Ovary (tissue), 10 donors: ENCODE measurements at regions of chr1 and their contacts with region 1.

Region 1: GRCh38 chr1:8463144-8463927 is 145.4 kb downstream of the SLC45A1 start:
- DNase-seq: peak in 3 of 5 donors; percentile 36 to 49 (median 43)
- H3K4me3 ChIP-seq: no peak overlapping the region
- H3K27ac ChIP-seq: peak overlapping the region; percentile 47 to 72
- H3K4me1 ChIP-seq: peaks cover 22% of the 10 kb centered on the region
- H3K27me3 ChIP-seq: no peaks in the 10 kb centered on the region
- CTCF ChIP-seq: no peak
- EP300 ChIP-seq: no peak
- POLR2A ChIP-seq: no peak

Region 2: DNA sequence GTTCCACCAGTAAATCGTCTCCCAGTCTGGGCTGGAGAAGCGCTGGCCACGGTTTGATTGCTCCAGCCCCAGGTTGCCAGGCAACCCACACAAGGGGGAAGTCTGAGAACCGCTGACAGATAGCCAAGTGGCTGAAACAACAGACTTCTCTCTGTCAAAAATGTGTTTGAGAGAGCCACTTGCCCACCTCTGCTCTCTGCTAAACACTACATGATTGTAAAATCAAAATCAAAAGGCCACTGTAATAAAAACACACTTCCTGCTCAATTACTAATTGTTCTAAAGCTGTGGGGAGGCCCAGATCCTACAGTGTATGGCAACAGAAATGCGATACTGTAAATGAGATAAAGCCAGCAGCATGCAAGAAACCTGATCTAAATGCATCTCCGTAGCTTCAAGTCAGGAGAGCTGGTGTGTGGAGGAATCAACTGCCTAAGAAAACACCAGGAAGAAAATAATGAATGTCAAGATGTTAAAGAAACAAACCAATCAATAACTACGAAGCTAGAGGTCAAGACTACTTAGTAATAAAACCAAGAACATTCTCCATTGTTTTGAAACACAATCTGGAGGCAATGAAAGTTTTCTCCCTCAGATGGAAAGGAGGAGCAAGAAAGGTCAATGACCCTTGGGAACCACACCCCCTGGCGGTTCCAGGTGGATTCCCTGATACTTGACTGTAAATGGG is 24.2 kb before region 1 on chr1:
- intact Hi-C with region 1: no loop called
- DNase-seq: peak; percentile 66 to 77 (median 71)
- H3K4me3 ChIP-seq: no peak overlapping the region
- H3K27ac ChIP-seq: no peak overlapping the region
- H3K4me1 ChIP-seq: peaks cover 4% of the 10 kb centered on the region
- H3K27me3 ChIP-seq: no peaks in the 10 kb centered on the region
- CTCF ChIP-seq: no peak
- EP300 ChIP-seq: no peak
- POLR2A ChIP-seq: no peak

Region 3: GRCh38 chr1:8598060-8598724 is 134.9 kb after region 1 on chr1:
- intact Hi-C with region 1: no loop called
- DNase-seq: peak; percentile 37 to 61 (median 47)
- H3K4me3 ChIP-seq: no peak overlapping the region
- H3K27ac ChIP-seq: peak overlapping the region; percentile 22 to 65
- H3K4me1 ChIP-seq: peaks cover 16% of the 10 kb centered on the region
- H3K27me3 ChIP-seq: no peaks in the 10 kb centered on the region
- CTCF ChIP-seq: peak; percentile 27 to 55 (median 44)
- EP300 ChIP-seq: no peak
- POLR2A ChIP-seq: no peak

Region 4: DNA sequence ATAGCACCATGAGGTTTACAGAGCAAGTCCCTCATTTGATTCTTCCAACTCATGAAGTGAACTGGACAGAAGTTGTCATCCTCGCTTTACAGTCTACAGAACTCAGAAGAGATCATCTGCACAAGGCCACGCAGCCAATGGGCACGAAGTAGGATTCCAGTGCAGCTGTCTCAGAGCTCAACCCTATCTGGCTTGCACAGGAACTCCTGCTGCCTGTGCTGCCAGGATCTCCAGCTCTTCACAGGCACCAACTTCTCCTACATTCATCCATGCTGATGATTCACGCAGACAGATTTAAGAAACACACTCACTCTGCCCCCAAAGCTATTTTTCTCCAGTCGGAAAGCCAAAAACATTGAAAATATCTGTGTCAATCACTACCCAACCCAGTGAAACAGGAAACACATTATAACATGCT is 197.1 kb after region 1 on chr1:
- intact Hi-C with region 1: loop called in 1 of 4 experiments (anchors 10 kb)
- DNase-seq: peak in 4 of 5 donors; percentile 34 to 46 (median 36)
- H3K4me3 ChIP-seq: no peak overlapping the region
- H3K27ac ChIP-seq: peak overlapping the region in 1 of 2 donors; percentile 51
- H3K4me1 ChIP-seq: peaks cover 32% of the 10 kb centered on the region
- H3K27me3 ChIP-seq: no peaks in the 10 kb centered on the region
- CTCF ChIP-seq: no peak
- EP300 ChIP-seq: no peak
- POLR2A ChIP-seq: no peak

Region 5: GRCh38 chr1:8776104-8776503 is 312.8 kb after region 1 on chr1:
- intact Hi-C with region 1: no loop called
- DNase-seq: no peak
- H3K4me3 ChIP-seq: no peak overlapping the region
- H3K27ac ChIP-seq: no peak overlapping the region
- H3K4me1 ChIP-seq: no peaks in the 10 kb centered on the region
- H3K27me3 ChIP-seq: no peaks in the 10 kb centered on the region
- CTCF ChIP-seq: no peak
- EP300 ChIP-seq: no peak
- POLR2A ChIP-seq: no peak

Region 6: GRCh38 chr1:9428601-9429341 is 965.4 kb after region 1 on chr1:
- intact Hi-C with region 1: no loop called
- DNase-seq: peak; percentile 99 to 100 (median 100)
- H3K4me3 ChIP-seq: peak overlapping the region; percentile 57
- H3K27ac ChIP-seq: peak overlapping the region; percentile 59 to 87
- H3K4me1 ChIP-seq: no peaks in the 10 kb centered on the region
- H3K27me3 ChIP-seq: no peaks in the 10 kb centered on the region
- CTCF ChIP-seq: peak in 2 of 3 donors; percentile 40 to 66
- EP300 ChIP-seq: no peak
- POLR2A ChIP-seq: peak; percentile 58